K562 (cell line): ENCODE measurements at regions of chr17 and their contacts with region 1.

Region 1: GRCh38 chr17:73255671-73256181 is 6.0 kb downstream of the CPSF4L start:
- DNase-seq: peak; percentile 66 to 78 (median 74)
- ATAC-seq: peak; percentile 89
- H3K4me3 ChIP-seq: no peak overlapping the region
- H3K27ac ChIP-seq: no peak overlapping the region
- H3K4me1 ChIP-seq: no peaks in the 10 kb centered on the region; a peak in 1 of 5 replicates
- H3K27me3 ChIP-seq: peaks cover 4 to 9% of the 10 kb centered on the region in 2 experiments; a peak in 4 of 5 replicates
- CTCF ChIP-seq: peak; percentile 91 to 97 (median 95)
- EP300 ChIP-seq: no peak
- POLR2A ChIP-seq: no peak
- RAD21 ChIP-seq: peak; percentile 99 to 100

Region 2: GRCh38 chr17:73091770-73092522 is 163.8 kb before region 1 on chr17:
- CTCF ChIA-PET with region 1: no interaction called
- POLR2A ChIA-PET with region 1: no interaction called
- in situ Hi-C with region 1: no loop called
- intact Hi-C with region 1: no loop called
- DNase-seq: peak; percentile 23 to 64 (median 47)
- ATAC-seq: peak; percentile 50
- H3K4me3 ChIP-seq: peak overlapping the region; percentile 67
- H3K27ac ChIP-seq: peak overlapping the region; percentile 53
- H3K4me1 ChIP-seq: peaks cover 6 to 12% of the 10 kb centered on the region in 2 experiments; a peak in 3 of 5 replicates
- H3K27me3 ChIP-seq: peaks cover 10 to 17% of the 10 kb centered on the region in 2 experiments; a peak in 3 of 5 replicates
- CTCF ChIP-seq: no peak
- EP300 ChIP-seq: no peak
- POLR2A ChIP-seq: no peak
- RAD21 ChIP-seq: no peak

Region 3: GRCh38 chr17:73203135-73203787 is 52.5 kb before region 1 on chr17:
- CTCF ChIA-PET with region 1: no interaction called
- POLR2A ChIA-PET with region 1: no interaction called
- in situ Hi-C with region 1: no loop called
- intact Hi-C with region 1: no loop called
- DNase-seq: no peak
- ATAC-seq: no peak
- H3K4me3 ChIP-seq: no peak overlapping the region
- H3K27ac ChIP-seq: no peak overlapping the region
- H3K4me1 ChIP-seq: peaks cover 3 to 8% of the 10 kb centered on the region in 2 experiments; a peak in 3 of 5 replicates
- H3K27me3 ChIP-seq: no peaks in the 10 kb centered on the region
- CTCF ChIP-seq: no peak
- EP300 ChIP-seq: no peak
- POLR2A ChIP-seq: no peak
- RAD21 ChIP-seq: no peak

Region 4: DNA sequence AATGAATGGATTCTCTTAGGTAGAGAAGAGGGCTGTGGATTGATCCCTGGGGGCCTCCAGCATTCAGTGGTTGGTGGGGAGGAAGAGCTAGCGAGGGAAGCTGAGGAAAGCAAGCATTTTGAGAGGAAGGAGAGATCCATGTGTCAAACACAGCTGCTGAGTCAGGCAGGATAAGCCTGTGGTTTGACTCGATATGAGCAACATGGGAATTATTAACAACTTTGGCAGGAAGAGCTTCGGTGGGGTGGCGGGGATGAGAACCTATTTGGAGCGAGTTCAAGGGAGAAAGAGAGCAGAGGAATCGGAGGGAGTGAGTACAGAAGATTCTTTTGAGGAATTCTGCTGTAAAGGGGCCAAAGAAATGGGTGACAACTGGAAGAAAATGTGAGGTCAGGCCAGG is 115.6 kb after region 1 on chr17:
- CTCF ChIA-PET with region 1: interaction called, 72 read pairs
- POLR2A ChIA-PET with region 1: interaction called, 4 read pairs
- in situ Hi-C with region 1: loop called (anchors 5 kb)
- intact Hi-C with region 1: loop called (anchors 1 kb)
- DNase-seq: no peak
- ATAC-seq: no peak
- H3K4me3 ChIP-seq: no peak overlapping the region
- H3K27ac ChIP-seq: no peak overlapping the region
- H3K4me1 ChIP-seq: peaks cover 2 to 9% of the 10 kb centered on the region in 2 experiments; a peak in 3 of 5 replicates
- H3K27me3 ChIP-seq: peaks cover 16 to 29% of the 10 kb centered on the region in 2 experiments
- CTCF ChIP-seq: no peak
- EP300 ChIP-seq: no peak
- POLR2A ChIP-seq: no peak
- RAD21 ChIP-seq: no peak